K562 (cell line): ENCODE measurements at regions of chr1 and their contacts with region 1.

Region 1: GRCh38 chr1:202306535-202307345 is 35.0 kb downstream of the UBE2T start:
- DNase-seq: no peak
- ATAC-seq: no peak
- H3K4me3 ChIP-seq: no peak overlapping the region
- H3K27ac ChIP-seq: no peak overlapping the region
- H3K4me1 ChIP-seq: no peaks in the 10 kb centered on the region
- H3K27me3 ChIP-seq: peaks cover 24 to 80% of the 10 kb centered on the region in 2 experiments; a peak in 4 of 5 replicates
- CTCF ChIP-seq: no peak
- EP300 ChIP-seq: no peak
- POLR2A ChIP-seq: no peak
- RAD21 ChIP-seq: no peak

Region 2: GRCh38 chr1:202329891-202330290 is 23.2 kb after region 1 on chr1:
- CTCF ChIA-PET with region 1: interaction called, 3 read pairs
- POLR2A ChIA-PET with region 1: interaction called, 13 read pairs
- in situ Hi-C with region 1: no loop called
- intact Hi-C with region 1: no loop called
- DNase-seq: peak in 2 of 4 experiments; percentile 32 to 41
- ATAC-seq: peak; percentile 83
- H3K4me3 ChIP-seq: no peak overlapping the region
- H3K27ac ChIP-seq: no peak overlapping the region
- H3K4me1 ChIP-seq: no peaks in the 10 kb centered on the region
- H3K27me3 ChIP-seq: no peaks in the 10 kb centered on the region
- CTCF ChIP-seq: peak; percentile 30 to 62 (median 54); a peak in 4 of 6 replicates
- EP300 ChIP-seq: no peak
- POLR2A ChIP-seq: peak; percentile 45; the same call in 1 of the 2 replicates
- RAD21 ChIP-seq: peak in 1 of 2 experiments; percentile 54; a peak in 2 of 4 replicates